MCF 10A (cell line): ENCODE measurements at regions of chr7 and their contacts with region 1.

Region 1: GRCh38 chr7:20260223-20260622 is 43.0 kb upstream of the MACC1 start:
- DNase-seq: no peak
- H3K4me3 Mint-ChIP-seq: no peak overlapping the region
- H3K27ac Mint-ChIP-seq: no peak overlapping the region
- H3K4me1 Mint-ChIP-seq: no peaks in the 10 kb centered on the region
- H3K27me3 Mint-ChIP-seq: no peaks in the 10 kb centered on the region
- CTCF ChIP-seq: no peak

Region 2: GRCh38 chr7:20219446-20220292 is 40.6 kb before region 1 on chr7:
- CTCF ChIA-PET with region 1: no interaction called
- POLR2A ChIA-PET with region 1: interaction called, 3 read pairs
- intact Hi-C with region 1: loop called (anchors 2 kb)
- DNase-seq: peak; percentile 82
- H3K4me3 Mint-ChIP-seq: no peak overlapping the region
- H3K27ac Mint-ChIP-seq: peak overlapping the region; percentile 77
- H3K4me1 Mint-ChIP-seq: peaks cover 45% of the 10 kb centered on the region
- H3K27me3 Mint-ChIP-seq: no peaks in the 10 kb centered on the region
- CTCF ChIP-seq: no peak

Region 3: GRCh38 chr7:20229646-20230500 is 30.4 kb before region 1 on chr7:
- CTCF ChIA-PET with region 1: no interaction called
- POLR2A ChIA-PET with region 1: no interaction called
- intact Hi-C with region 1: no loop called
- DNase-seq: peak; percentile 74
- H3K4me3 Mint-ChIP-seq: no peak overlapping the region
- H3K27ac Mint-ChIP-seq: no peak overlapping the region
- H3K4me1 Mint-ChIP-seq: no peaks in the 10 kb centered on the region
- H3K27me3 Mint-ChIP-seq: no peaks in the 10 kb centered on the region
- CTCF ChIP-seq: no peak